CD8-positive, alpha-beta T cell (primary cell): ENCODE measurements at regions of chr9 and their contacts with region 1.

Region 1: GRCh38 chr9:89000973-89001916 is 10.0 kb downstream of the S1PR3 start:
- DNase-seq: peak; percentile 45 to 86 (median 74)
- ATAC-seq: peak; percentile 54
- H3K4me3 ChIP-seq: no peak overlapping the region
- H3K4me3 Mint-ChIP-seq: no peak overlapping the region
- H3K27ac ChIP-seq: no peak overlapping the region
- H3K27ac Mint-ChIP-seq: no peak overlapping the region
- H3K4me1 ChIP-seq: peaks cover 6% of the 10 kb centered on the region
- H3K4me1 Mint-ChIP-seq: peaks cover 5% of the 10 kb centered on the region
- H3K27me3 ChIP-seq: no peaks in the 10 kb centered on the region
- H3K27me3 Mint-ChIP-seq: peaks cover 18% of the 10 kb centered on the region
- CTCF ChIP-seq: peak; percentile 68

Region 2: DNA sequence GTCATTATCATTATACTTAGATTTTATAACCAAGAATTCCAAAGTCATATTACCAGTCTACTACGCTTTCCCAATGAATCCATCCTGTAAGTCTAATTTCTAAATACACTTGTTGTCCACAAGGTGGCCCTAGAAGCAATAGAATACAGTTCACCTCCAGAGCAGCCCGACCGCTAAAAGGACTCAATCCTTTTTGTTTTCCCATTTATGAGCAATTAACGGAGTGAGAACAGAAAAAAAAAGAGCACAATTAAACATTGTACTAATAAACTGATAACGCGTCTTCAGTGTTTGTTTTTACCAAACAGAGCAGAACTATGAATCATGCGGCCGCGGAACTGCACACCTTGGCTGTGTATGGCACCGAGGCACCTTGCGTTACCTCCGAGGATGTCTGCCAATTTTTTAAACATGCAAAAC is 1664.3 kb before region 1 on chr9:
- CTCF ChIA-PET with region 1: no interaction called
- POLR2A ChIA-PET with region 1: no interaction called
- intact Hi-C with region 1: loop called in 1 of 2 experiments (anchors 5 kb)
- DNase-seq: peak in 2 of 9 experiments; percentile 37 to 54
- ATAC-seq: no peak
- H3K4me3 ChIP-seq: peak overlapping the region in 1 of 2 experiments; percentile 49
- H3K4me3 Mint-ChIP-seq: peak overlapping the region; percentile 70
- H3K27ac ChIP-seq: no peak overlapping the region
- H3K27ac Mint-ChIP-seq: no peak overlapping the region
- H3K4me1 ChIP-seq: no peaks in the 10 kb centered on the region
- H3K4me1 Mint-ChIP-seq: peaks cover 13% of the 10 kb centered on the region
- H3K27me3 ChIP-seq: peaks cover 3 to 11% of the 10 kb centered on the region in 2 experiments
- H3K27me3 Mint-ChIP-seq: peaks cover 39% of the 10 kb centered on the region
- CTCF ChIP-seq: peak; percentile 55

Region 3: GRCh38 chr9:88173378-88173999 is 827.8 kb before region 1 on chr9:
- CTCF ChIA-PET with region 1: no interaction called
- POLR2A ChIA-PET with region 1: no interaction called
- intact Hi-C with region 1: loop called in 1 of 2 experiments (anchors 10 kb)
- DNase-seq: peak; percentile 16 to 80 (median 60)
- ATAC-seq: peak; percentile 58
- H3K4me3 ChIP-seq: no peak overlapping the region
- H3K4me3 Mint-ChIP-seq: no peak overlapping the region
- H3K27ac ChIP-seq: no peak overlapping the region
- H3K27ac Mint-ChIP-seq: no peak overlapping the region
- H3K4me1 ChIP-seq: no peaks in the 10 kb centered on the region
- H3K4me1 Mint-ChIP-seq: peaks cover 1% of the 10 kb centered on the region
- H3K27me3 ChIP-seq: no peaks in the 10 kb centered on the region
- H3K27me3 Mint-ChIP-seq: peaks cover 2% of the 10 kb centered on the region
- CTCF ChIP-seq: peak; percentile 80

Region 4: DNA sequence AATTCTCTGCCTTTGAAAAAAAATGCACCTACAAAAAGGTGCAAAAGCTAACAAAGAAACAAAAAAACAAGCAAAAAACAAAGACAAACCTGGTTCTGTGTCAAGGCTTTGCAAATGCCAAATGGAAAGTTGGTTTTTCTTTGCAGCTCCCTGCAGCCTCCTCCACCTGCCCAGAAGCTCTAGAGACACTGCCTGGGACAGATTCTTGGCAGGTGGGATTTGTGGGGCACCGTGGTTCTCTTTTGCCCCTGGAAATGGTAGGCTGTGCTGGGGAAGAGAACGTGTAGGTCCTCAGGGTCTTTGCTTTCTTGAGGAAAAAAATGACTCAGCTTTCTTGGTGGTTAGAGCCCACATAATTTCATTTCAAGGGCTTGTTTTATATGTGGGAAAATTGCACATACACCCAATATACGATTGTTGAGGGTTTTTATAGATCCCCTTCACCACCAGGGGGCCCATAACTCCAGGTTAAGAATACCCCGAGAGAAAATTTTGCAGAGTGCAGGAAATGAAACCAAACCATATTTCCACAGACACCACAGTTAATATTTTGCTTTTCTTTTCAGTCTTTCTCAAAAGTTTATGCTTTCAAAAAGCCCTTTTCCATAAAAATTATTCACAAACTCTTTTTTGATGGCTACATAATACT is 407.6 kb before region 1 on chr9:
- CTCF ChIA-PET with region 1: interaction called, 41 read pairs
- POLR2A ChIA-PET with region 1: no interaction called
- intact Hi-C with region 1: loop called in 1 of 2 experiments (anchors 1 kb)
- DNase-seq: peak; percentile 13 to 69 (median 50)
- ATAC-seq: peak; percentile 64
- H3K4me3 ChIP-seq: no peak overlapping the region
- H3K4me3 Mint-ChIP-seq: no peak overlapping the region
- H3K27ac ChIP-seq: no peak overlapping the region
- H3K27ac Mint-ChIP-seq: no peak overlapping the region
- H3K4me1 ChIP-seq: no peaks in the 10 kb centered on the region
- H3K4me1 Mint-ChIP-seq: peaks cover 4% of the 10 kb centered on the region
- H3K27me3 ChIP-seq: no peaks in the 10 kb centered on the region
- H3K27me3 Mint-ChIP-seq: peaks cover 19% of the 10 kb centered on the region
- CTCF ChIP-seq: peak; percentile 71

Region 5: GRCh38 chr9:88660611-88661010 is 340.6 kb before region 1 on chr9:
- CTCF ChIA-PET with region 1: no interaction called
- POLR2A ChIA-PET with region 1: no interaction called
- intact Hi-C with region 1: loop called in 1 of 2 experiments (anchors 2 kb)
- DNase-seq: peak in 1 of 9 experiments; percentile 11
- ATAC-seq: no peak
- H3K4me3 ChIP-seq: no peak overlapping the region
- H3K4me3 Mint-ChIP-seq: no peak overlapping the region
- H3K27ac ChIP-seq: no peak overlapping the region
- H3K27ac Mint-ChIP-seq: no peak overlapping the region
- H3K4me1 ChIP-seq: no peaks in the 10 kb centered on the region
- H3K4me1 Mint-ChIP-seq: no peaks in the 10 kb centered on the region
- H3K27me3 ChIP-seq: no peaks in the 10 kb centered on the region
- H3K27me3 Mint-ChIP-seq: peaks cover 7% of the 10 kb centered on the region
- CTCF ChIP-seq: no peak

Region 6: DNA sequence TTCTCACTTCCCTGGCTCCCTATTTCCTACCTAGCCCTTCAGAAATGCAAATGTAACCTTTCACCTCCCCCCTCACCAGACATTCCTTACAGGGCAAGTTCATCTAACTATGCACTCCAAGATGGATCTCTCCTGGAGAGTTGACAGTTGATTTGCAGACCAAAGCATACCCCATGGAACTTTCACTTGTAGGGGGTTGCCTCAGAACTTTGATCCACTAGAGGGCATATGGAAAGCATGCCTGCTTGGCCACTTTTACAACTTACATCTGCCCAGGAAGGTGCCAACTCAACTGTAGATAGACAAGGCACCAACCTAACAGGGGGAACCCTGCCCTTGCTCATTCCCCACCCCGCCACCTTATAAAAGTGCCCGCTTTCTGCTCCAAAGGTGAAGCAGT is 278.5 kb before region 1 on chr9:
- CTCF ChIA-PET with region 1: interaction called, 4 read pairs
- POLR2A ChIA-PET with region 1: no interaction called
- intact Hi-C with region 1: loop called (anchors 1 to 2 kb)
- DNase-seq: peak in 1 of 9 experiments; percentile 21
- ATAC-seq: no peak
- H3K4me3 ChIP-seq: no peak overlapping the region
- H3K4me3 Mint-ChIP-seq: no peak overlapping the region
- H3K27ac ChIP-seq: no peak overlapping the region
- H3K27ac Mint-ChIP-seq: no peak overlapping the region
- H3K4me1 ChIP-seq: no peaks in the 10 kb centered on the region
- H3K4me1 Mint-ChIP-seq: no peaks in the 10 kb centered on the region
- H3K27me3 ChIP-seq: no peaks in the 10 kb centered on the region
- H3K27me3 Mint-ChIP-seq: peaks cover 18% of the 10 kb centered on the region
- CTCF ChIP-seq: no peak

Region 7: DNA sequence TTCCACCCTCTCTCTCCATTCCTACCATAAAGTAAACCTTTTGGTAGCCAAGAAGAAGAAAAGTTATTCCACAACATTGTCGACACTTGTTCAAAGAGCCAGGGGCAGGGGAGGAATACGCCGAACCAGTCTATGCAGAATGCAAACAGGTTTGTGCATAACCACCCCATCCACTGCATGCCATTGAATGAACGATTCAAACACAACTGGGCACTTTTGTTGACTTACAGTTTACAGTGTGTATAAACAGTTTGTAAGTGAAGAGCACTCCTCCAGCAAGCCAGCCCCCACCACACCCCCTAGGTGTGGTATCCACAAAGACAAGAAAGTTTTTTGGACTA is 16.7 kb before region 1 on chr9:
- CTCF ChIA-PET with region 1: no interaction called
- POLR2A ChIA-PET with region 1: no interaction called
- intact Hi-C with region 1: no loop called
- DNase-seq: no peak
- ATAC-seq: no peak
- H3K4me3 ChIP-seq: no peak overlapping the region
- H3K4me3 Mint-ChIP-seq: no peak overlapping the region
- H3K27ac ChIP-seq: no peak overlapping the region
- H3K27ac Mint-ChIP-seq: no peak overlapping the region
- H3K4me1 ChIP-seq: peaks cover 8% of the 10 kb centered on the region
- H3K4me1 Mint-ChIP-seq: peaks cover 6% of the 10 kb centered on the region
- H3K27me3 ChIP-seq: no peaks in the 10 kb centered on the region
- H3K27me3 Mint-ChIP-seq: peaks cover 10% of the 10 kb centered on the region
- CTCF ChIP-seq: no peak

Region 8: GRCh38 chr9:89021154-89021803 is 20.0 kb after region 1 on chr9:
- CTCF ChIA-PET with region 1: no interaction called
- POLR2A ChIA-PET with region 1: no interaction called
- intact Hi-C with region 1: no loop called
- DNase-seq: no peak
- ATAC-seq: no peak
- H3K4me3 ChIP-seq: no peak overlapping the region
- H3K4me3 Mint-ChIP-seq: no peak overlapping the region
- H3K27ac ChIP-seq: no peak overlapping the region
- H3K27ac Mint-ChIP-seq: no peak overlapping the region
- H3K4me1 ChIP-seq: no peaks in the 10 kb centered on the region
- H3K4me1 Mint-ChIP-seq: no peaks in the 10 kb centered on the region
- H3K27me3 ChIP-seq: peaks cover 0 to 2% of the 10 kb centered on the region in 2 experiments
- H3K27me3 Mint-ChIP-seq: peaks cover 8% of the 10 kb centered on the region
- CTCF ChIP-seq: no peak

Region 9: DNA sequence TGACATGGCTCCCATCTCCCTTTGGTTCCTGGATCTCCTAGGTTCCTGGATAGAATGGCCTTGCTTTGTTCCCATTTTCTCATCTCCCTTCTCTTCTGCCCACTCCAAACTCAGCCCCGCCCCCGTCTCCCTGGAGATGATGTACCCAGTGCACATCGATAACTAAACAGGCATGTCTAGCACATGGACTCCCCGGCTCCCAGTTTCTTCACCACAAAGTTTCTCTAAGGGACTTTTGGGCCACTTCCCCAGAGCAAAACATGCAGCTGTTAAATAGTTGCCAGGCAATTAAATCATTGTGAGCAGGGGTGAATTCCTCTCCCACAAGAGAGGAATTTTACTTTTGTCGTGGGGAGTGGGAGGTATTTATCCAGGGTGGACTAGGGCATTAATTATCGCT is 862.6 kb after region 1 on chr9:
- CTCF ChIA-PET with region 1: no interaction called
- POLR2A ChIA-PET with region 1: no interaction called
- intact Hi-C with region 1: no loop called
- DNase-seq: no peak
- ATAC-seq: no peak
- H3K4me3 ChIP-seq: no peak overlapping the region
- H3K4me3 Mint-ChIP-seq: no peak overlapping the region
- H3K27ac ChIP-seq: no peak overlapping the region
- H3K27ac Mint-ChIP-seq: no peak overlapping the region
- H3K4me1 ChIP-seq: no peaks in the 10 kb centered on the region
- H3K4me1 Mint-ChIP-seq: no peaks in the 10 kb centered on the region
- H3K27me3 ChIP-seq: no peaks in the 10 kb centered on the region
- H3K27me3 Mint-ChIP-seq: no peaks in the 10 kb centered on the region
- CTCF ChIP-seq: no peak